OCI-LY7 (cell line): ENCODE measurements at regions of chr20 and their contacts with region 1.

Region 1: DNA sequence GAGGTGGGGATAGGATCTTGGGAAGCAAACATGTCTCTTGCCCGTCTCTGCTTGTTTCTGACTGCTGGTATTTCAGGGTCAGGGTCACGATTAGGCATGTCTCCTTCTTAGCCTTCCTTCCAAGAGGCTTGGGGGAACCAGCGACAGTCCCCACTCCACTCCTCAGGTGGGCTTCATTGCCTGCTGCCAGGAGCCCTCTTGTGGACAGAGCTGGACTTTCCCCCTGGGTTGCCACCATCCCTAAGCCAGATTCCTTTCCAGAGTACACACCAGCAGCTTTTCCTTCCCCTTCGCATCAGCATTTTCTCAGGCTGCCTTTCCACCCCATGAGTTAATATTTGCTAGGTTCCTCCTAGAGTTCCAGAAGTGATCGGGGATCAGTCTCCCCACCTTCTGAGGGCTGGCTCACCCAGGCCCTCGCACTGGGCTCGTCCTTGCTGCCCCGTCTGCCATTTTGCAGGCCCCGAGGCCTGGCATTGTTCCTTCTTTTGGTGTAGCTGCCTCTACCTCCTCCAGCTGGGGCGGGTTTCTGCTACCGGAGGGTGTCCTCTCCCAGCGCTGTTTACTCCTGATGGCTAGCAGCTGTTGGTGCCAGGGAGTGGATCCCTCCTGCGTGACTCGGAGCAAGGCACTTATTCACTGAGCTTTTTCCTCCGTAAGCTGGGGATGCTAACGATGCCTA is 8.8 kb upstream of the C20orf144 start:
- DNase-seq: peak; percentile 82
- H3K4me3 ChIP-seq: no peak overlapping the region
- H3K27ac ChIP-seq: peak overlapping the region; percentile 0
- H3K4me1 ChIP-seq: peaks cover 19% of the 10 kb centered on the region
- CTCF ChIP-seq: peak; percentile 91

Region 2: DNA sequence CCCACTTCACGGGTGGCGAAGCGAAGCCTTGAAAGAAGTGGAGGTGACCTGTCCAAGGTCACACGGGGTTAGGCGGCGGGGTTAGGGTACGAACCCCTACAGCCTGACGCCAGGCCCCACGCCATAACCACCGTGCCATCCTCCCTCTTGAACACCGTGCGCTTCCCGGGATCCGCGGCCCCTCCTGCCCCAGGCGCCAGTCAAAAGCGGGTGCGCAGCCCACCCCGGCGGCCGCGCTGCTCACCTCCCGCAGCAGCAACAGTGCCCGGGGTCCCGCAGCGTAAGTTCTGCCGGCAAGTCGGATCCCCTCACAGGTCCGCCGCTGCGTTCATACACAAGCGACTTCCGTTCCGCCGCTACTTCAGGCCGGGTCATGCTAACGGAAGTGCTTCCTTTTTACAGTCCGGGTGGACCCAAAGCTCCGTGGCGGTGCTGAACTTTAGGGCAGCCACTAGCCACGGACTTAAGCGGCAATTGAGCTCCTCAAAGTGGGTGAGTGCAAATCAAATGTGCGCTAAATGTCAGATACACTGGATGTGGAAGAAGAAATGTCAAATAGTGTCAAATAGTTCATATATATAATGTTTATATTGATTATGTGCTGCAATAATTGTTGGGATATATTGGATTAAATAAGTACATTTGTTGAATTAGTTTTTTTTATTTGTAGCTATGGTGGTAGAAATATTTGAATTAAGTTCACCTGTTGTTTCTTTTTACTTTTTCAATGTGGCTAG is 252.0 kb before region 1 on chr20 and contains the start of gene CDK5RAP1:
- CTCF ChIA-PET with region 1: no interaction called
- POLR2A ChIA-PET with region 1: no interaction called
- intact Hi-C with region 1: loop called (anchors 5 kb)
- DNase-seq: peak; percentile 96
- H3K4me3 ChIP-seq: peak within 1 kb of the TSS; percentile 94
- H3K27ac ChIP-seq: peak within 1 kb of the TSS; percentile 65
- H3K4me1 ChIP-seq: peaks cover 32% of the 10 kb centered on the region
- CTCF ChIP-seq: 0 out of 2 replicates have a peak, but pooled peaks have one; percentile 8
- total RNA-seq, gene CDK5RAP1: 32.1 and 41.2 TPM in 2 replicates

Region 3: DNA sequence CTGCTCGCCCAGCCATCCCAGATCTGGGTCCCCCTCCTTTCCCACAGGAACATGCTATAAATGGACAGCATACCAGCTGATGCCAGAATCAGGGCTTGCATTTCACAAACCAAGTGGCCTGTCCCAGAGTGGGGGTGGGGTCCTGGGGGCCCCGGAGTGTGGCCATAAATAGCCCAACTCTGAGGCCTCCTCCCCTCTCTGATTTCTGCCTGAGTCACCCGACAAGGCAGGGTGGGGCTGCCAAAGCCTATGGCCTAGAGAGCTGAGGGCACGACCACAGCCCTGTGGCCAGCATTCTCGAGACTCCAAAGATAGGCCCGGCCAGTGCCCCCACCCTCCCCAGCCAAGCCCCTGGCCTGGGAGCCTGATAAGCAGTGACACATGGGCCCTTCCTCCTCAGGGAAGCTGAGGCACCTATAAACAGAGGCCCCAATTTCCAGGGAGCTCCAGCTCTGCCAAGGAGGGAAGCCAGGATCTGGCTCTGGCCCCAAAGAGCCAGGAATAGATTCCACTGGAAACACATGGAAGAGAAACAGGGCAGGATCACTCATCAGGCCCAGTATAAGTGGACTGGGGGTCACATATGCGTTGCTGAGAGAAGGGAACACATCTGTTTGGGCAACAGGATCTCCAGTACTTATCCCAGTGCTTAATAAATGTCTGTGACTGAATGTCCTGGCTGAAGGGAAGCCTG is 230.1 kb before region 1 on chr20:
- CTCF ChIA-PET with region 1: no interaction called
- POLR2A ChIA-PET with region 1: no interaction called
- intact Hi-C with region 1: no loop called
- DNase-seq: no peak
- H3K4me3 ChIP-seq: no peak overlapping the region
- H3K27ac ChIP-seq: no peak overlapping the region
- H3K4me1 ChIP-seq: no peaks in the 10 kb centered on the region
- CTCF ChIP-seq: no peak

Region 4: DNA sequence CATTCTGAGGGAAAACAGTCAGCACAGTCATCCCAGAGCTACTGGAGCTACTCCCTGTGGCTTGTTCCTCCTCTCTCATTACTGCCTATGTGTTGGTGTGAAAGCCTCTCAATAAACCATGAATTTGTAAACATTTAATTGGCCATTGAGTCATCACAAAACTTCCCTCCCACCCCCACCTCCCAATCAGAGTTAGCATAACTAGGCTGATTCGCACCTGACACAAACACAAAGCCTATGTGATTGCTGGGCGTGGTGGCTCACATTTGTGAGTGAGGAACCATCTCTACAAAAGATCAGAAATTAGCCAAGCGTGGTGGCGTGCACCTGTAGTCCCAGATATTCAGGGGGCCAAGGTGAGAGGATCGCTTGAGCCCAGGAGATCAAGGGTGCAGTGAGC is 192.6 kb before region 1 on chr20:
- CTCF ChIA-PET with region 1: no interaction called
- POLR2A ChIA-PET with region 1: interaction called, 4 read pairs
- intact Hi-C with region 1: loop called (anchors 1 kb)
- DNase-seq: peak; percentile 80
- H3K4me3 ChIP-seq: no peak overlapping the region
- H3K27ac ChIP-seq: peak overlapping the region; percentile 59
- H3K4me1 ChIP-seq: peaks cover 31% of the 10 kb centered on the region
- CTCF ChIP-seq: no peak

Region 5: GRCh38 chr20:33515569-33516216 is 137.7 kb before region 1 on chr20:
- CTCF ChIA-PET with region 1: no interaction called
- POLR2A ChIA-PET with region 1: interaction called, 3 read pairs
- intact Hi-C with region 1: loop called (anchors 1 kb)
- DNase-seq: peak; percentile 38
- H3K4me3 ChIP-seq: no peak overlapping the region
- H3K27ac ChIP-seq: no peak overlapping the region
- H3K4me1 ChIP-seq: peaks cover 38% of the 10 kb centered on the region
- CTCF ChIP-seq: peak; percentile 80